MCF 10A (cell line): ENCODE measurements at regions of chr12 and their contacts with region 1.

Region 1: GRCh38 chr12:6944381-6945186 is 762 bp downstream of the C12orf57 start:
- DNase-seq: peak; percentile 96
- H3K4me3 Mint-ChIP-seq: peak overlapping the region; percentile 85
- H3K27ac Mint-ChIP-seq: peak overlapping the region; percentile 98
- H3K4me1 Mint-ChIP-seq: peaks cover 32% of the 10 kb centered on the region
- H3K27me3 Mint-ChIP-seq: no peaks in the 10 kb centered on the region
- CTCF ChIP-seq: peak; percentile 63

Region 2: GRCh38 chr12:5783289-5783920 is 1161.2 kb before region 1 on chr12:
- CTCF ChIA-PET with region 1: no interaction called
- POLR2A ChIA-PET with region 1: no interaction called
- intact Hi-C with region 1: no loop called
- DNase-seq: no peak
- H3K4me3 Mint-ChIP-seq: no peak overlapping the region
- H3K27ac Mint-ChIP-seq: no peak overlapping the region
- H3K4me1 Mint-ChIP-seq: no peaks in the 10 kb centered on the region
- H3K27me3 Mint-ChIP-seq: no peaks in the 10 kb centered on the region
- CTCF ChIP-seq: no peak

Region 3: DNA sequence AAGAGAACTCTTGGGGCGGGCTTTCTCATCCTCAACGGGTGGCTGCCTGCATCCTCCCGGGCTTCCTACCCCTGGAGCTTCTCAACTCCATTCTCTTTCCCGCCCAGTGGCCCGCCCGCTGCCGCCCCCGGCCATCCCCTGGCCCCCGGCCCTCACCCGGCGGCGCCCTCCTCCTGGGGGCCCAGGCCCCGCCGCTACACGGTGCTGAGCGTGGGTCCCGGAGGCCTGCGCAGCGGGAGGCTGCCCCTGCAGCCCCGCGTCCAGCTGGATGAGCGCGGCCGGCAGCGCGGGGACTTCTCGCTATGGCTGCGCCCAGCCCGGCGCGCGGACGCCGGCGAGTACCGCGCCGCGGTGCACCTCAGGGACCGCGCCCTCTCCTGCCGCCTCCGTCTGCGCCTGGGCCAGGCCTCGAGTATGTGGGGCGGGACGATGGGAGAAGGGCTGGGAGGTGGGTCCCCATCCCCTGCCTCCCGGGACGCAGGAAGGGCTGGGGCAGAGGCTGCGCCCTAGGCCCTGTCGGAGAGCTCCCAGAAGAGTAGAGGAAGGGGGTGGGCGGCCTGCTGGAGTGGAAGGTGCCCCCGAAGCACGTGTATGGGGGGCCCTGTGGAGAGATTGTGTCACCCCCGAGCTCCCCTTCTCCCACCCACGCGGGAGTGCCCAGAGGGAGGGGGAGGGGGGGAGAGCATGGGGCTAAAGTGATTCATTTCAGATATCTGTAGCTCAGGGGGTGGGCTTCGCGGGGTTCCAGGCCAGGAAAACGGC is 170.8 kb before region 1 on chr12:
- CTCF ChIA-PET with region 1: no interaction called
- POLR2A ChIA-PET with region 1: no interaction called
- intact Hi-C with region 1: no loop called
- DNase-seq: no peak
- H3K4me3 Mint-ChIP-seq: no peak overlapping the region
- H3K27ac Mint-ChIP-seq: no peak overlapping the region
- H3K4me1 Mint-ChIP-seq: peaks cover 37% of the 10 kb centered on the region
- H3K27me3 Mint-ChIP-seq: no peaks in the 10 kb centered on the region
- CTCF ChIP-seq: no peak

Region 4: GRCh38 chr12:6873094-6874014 is 71.2 kb before region 1 on chr12 and contains the start of gene SPSB2:
- CTCF ChIA-PET with region 1: interaction called, 21 read pairs
- POLR2A ChIA-PET with region 1: interaction called, 62 read pairs
- intact Hi-C with region 1: loop called (anchors 2 kb)
- DNase-seq: peak; percentile 93
- H3K4me3 Mint-ChIP-seq: peak within 1 kb of the TSS; percentile 91
- H3K27ac Mint-ChIP-seq: peak within 1 kb of the TSS; percentile 77
- H3K4me1 Mint-ChIP-seq: peaks cover 24% of the 10 kb centered on the region
- H3K27me3 Mint-ChIP-seq: no peaks in the 10 kb centered on the region
- CTCF ChIP-seq: no peak
- total RNA-seq, gene SPSB2: 9.2 and 10.8 TPM in 2 replicates

Region 5: GRCh38 chr12:6959058-6959804 is 14.6 kb after region 1 on chr12:
- CTCF ChIA-PET with region 1: interaction called, 160 read pairs
- POLR2A ChIA-PET with region 1: interaction called, 495 read pairs
- intact Hi-C with region 1: loop called (anchors 1 kb)
- DNase-seq: no peak
- H3K4me3 Mint-ChIP-seq: no peak overlapping the region
- H3K27ac Mint-ChIP-seq: no peak overlapping the region
- H3K4me1 Mint-ChIP-seq: peaks cover 33% of the 10 kb centered on the region
- H3K27me3 Mint-ChIP-seq: no peaks in the 10 kb centered on the region
- CTCF ChIP-seq: no peak

Region 6: GRCh38 chr12:7042842-7043241 is 98.3 kb after region 1 on chr12:
- CTCF ChIA-PET with region 1: interaction called, 18 read pairs
- POLR2A ChIA-PET with region 1: interaction called, 3 read pairs
- intact Hi-C with region 1: loop called (anchors 1 kb)
- DNase-seq: peak; percentile 71
- H3K4me3 Mint-ChIP-seq: no peak overlapping the region
- H3K27ac Mint-ChIP-seq: peak overlapping the region; percentile 25
- H3K4me1 Mint-ChIP-seq: peaks cover 23% of the 10 kb centered on the region
- H3K27me3 Mint-ChIP-seq: no peaks in the 10 kb centered on the region
- CTCF ChIP-seq: peak; percentile 34

Region 7: DNA sequence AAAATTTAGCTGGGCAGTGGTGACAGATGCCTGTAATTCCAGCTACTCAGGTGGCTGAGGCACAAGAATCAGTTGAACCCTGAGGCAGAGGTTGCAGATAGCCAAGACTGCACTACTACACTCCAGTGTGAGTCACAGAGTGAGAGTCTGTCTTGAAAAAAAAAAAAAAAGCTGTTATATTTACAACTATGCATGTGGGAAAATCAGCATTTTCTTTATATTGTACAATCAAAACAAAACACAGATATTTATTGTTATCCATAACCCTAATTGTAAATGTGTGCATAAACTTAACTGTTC is 135.2 kb after region 1 on chr12:
- CTCF ChIA-PET with region 1: no interaction called
- POLR2A ChIA-PET with region 1: interaction called, 11 read pairs
- intact Hi-C with region 1: no loop called
- DNase-seq: peak; percentile 89
- H3K4me3 Mint-ChIP-seq: peak overlapping the region; percentile 46
- H3K27ac Mint-ChIP-seq: peak overlapping the region; percentile 73
- H3K4me1 Mint-ChIP-seq: peaks cover 26% of the 10 kb centered on the region
- H3K27me3 Mint-ChIP-seq: no peaks in the 10 kb centered on the region
- CTCF ChIP-seq: no peak

Region 8: DNA sequence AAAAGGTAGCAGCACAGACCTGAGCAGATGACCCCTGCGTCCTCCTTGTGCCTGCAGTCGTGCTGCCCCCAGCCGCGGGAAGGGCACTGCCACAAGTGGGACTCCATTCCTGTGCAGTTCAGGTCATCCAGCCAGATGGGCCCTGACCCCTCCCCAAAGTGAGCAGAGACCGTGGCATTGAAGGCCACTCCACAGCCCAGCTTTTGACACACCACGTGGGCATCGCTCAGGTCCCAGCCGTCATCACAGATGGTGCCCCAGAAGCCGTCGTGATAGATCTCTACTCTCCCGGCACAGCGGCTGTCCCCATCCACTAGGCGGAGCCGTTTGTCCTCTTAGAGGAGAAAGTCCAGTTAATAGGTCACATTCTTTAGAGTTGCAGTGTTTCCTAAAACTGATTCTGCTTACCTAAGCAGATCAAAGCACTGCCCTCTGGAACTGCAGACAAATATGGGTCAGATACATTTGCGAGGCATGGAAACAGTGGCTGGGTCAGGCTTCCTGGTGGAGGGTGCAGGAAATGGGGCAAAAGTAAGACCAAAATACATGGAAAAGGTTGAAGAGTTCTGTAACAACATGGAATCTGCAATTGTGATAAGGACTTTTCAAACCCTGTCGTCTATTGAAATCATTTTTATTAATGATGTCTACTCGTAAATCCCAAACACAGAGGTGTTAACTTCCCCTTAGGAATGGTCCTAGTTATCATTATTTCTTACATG is 430.0 kb after region 1 on chr12:
- CTCF ChIA-PET with region 1: no interaction called
- POLR2A ChIA-PET with region 1: no interaction called
- intact Hi-C with region 1: no loop called
- DNase-seq: peak; percentile 72
- H3K4me3 Mint-ChIP-seq: no peak overlapping the region
- H3K27ac Mint-ChIP-seq: no peak overlapping the region
- H3K4me1 Mint-ChIP-seq: peaks cover 11% of the 10 kb centered on the region
- H3K27me3 Mint-ChIP-seq: no peaks in the 10 kb centered on the region
- CTCF ChIP-seq: peak; percentile 32